Activated CD4-positive, alpha-beta T cell treated with anti-CD3 and anti-CD28 coated beads for 36 hours (primary cell): ENCODE measurements at regions of chr3 and their contacts with region 1.

Region 1: DNA sequence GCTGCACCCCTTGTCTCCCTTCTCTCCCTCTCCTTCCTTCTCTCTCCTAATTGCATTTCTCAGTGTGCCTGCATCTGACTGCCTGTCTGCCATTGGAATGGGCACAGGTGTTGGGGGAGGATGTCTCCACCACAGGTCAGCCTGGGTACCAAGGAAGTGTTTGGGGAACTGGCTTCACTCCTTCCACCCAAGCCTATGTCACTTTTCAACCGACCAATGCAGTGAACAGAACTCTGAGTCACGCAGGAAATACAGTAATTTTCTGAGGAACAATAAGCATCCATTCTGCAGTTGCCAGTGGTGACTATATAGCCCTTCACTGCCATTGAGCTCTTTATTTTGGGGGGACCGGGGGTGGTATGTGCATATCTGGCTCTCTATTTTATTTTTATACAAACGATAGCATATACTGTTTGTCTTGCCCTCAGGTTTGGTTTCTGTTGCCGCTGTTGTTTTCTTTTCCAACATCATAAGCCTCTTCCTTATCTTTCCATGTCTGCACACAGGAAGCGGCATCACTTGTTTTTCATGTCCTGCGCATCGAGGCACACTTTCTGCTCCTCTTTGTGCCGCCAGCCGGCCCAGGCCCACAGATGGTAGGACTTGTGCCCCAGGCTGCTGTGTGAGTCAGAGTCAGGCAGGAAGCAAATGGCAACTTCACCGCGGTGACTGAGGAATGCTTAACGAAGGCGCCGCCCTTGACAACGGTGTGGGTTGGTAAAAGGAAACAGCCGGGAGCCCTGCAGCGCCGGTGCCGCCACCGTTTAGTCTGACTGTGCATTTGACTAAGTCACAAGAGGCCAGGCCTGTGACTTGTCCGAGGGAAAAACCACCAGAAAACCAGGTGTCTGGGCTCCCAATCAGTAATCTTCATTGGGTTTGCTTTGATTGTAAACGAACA is 21.1 kb upstream of the CDCP1 start:
- DNase-seq: peak; percentile 94
- ATAC-seq: peak; percentile 96
- H3K4me3 Mint-ChIP-seq: peak overlapping the region; percentile 63
- H3K27ac Mint-ChIP-seq: peak overlapping the region; percentile 98
- H3K4me1 Mint-ChIP-seq: peaks cover 37% of the 10 kb centered on the region
- H3K27me3 Mint-ChIP-seq: no peaks in the 10 kb centered on the region

Region 2: DNA sequence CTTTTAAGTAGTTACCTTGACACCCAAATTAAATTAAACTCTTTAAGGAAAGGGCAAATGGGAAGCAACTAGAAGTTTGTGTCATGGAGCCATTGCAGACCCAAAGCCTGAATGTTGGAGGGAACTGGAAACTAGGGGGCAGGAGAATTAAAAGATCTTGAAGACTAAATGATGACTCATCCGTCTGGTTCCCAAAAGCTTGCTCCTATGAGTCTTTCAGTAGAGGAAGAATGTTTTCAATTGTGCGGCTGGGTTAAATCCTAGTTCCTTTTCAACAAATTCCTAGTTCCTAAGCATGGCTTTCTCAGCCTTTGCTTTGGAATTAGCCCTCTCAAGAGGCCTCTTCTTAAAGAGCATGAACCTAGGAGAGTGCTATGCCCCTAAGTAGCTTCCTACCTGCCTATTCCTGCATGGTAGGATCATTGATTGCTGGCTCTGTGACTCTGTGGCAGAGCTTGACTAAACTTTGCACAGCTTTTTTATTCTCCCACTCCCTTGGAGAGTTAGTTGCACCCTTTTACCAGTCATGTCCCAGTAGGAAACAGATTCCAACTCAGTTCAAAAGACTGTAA is 123.4 kb before region 1 on chr3:
- CTCF ChIA-PET with region 1: interaction called, 4 read pairs
- POLR2A ChIA-PET with region 1: no interaction called
- intact Hi-C with region 1: loop called in 1 of 2 experiments (anchors 5 kb)
- DNase-seq: no peak
- ATAC-seq: no peak
- H3K4me3 Mint-ChIP-seq: no peak overlapping the region
- H3K27ac Mint-ChIP-seq: no peak overlapping the region
- H3K4me1 Mint-ChIP-seq: peaks cover 23% of the 10 kb centered on the region
- H3K27me3 Mint-ChIP-seq: peaks cover 3% of the 10 kb centered on the region

Region 3: DNA sequence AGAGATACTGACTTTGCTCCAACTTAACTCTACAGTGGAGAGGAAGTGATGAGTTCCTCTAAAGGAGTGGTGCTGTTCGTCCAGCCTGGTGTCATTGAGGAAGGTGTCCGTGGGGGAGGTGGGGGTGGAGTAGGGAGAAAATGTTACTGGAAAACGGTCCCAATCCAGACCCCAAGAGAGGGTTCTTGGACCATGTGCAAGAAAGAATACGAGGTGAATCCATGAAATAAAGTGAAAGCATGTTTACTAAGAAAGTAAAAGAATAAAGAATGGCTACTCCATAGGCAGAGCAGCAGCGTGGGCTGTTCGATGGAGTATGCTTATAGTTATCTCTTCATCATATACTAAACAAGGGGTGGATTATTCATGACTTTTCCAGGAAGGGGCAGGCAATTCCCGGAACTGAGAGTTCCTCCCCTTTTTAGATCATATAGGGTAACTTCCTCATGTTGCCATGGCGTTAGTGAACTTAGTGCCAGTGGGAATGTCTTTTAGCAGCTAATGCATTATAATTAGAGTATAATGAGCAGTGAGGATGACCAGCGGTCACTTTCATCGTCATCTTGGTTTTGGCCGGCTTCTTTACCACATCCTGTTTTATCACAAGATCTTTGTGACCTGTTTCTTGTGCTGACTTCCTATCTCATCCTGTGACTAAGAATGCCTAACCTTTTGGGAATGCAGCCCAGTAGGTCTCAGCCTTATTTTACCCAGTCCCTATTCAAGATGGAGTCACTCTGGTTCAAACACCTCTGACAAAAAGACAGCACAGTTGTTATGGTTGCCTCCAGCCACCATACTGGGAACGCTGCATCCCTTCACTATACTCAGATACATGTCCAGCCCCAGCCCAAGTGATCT is 102.5 kb before region 1 on chr3:
- CTCF ChIA-PET with region 1: no interaction called
- POLR2A ChIA-PET with region 1: no interaction called
- intact Hi-C with region 1: loop called in 1 of 2 experiments (anchors 5 kb)
- DNase-seq: peak; percentile 80
- ATAC-seq: peak; percentile 84
- H3K4me3 Mint-ChIP-seq: peak overlapping the region; percentile 37
- H3K27ac Mint-ChIP-seq: peak overlapping the region; percentile 82
- H3K4me1 Mint-ChIP-seq: peaks cover 30% of the 10 kb centered on the region
- H3K27me3 Mint-ChIP-seq: peaks cover 2% of the 10 kb centered on the region

Region 4: GRCh38 chr3:45105855-45106671 is 61.2 kb before region 1 on chr3:
- CTCF ChIA-PET with region 1: interaction called, 3 read pairs
- POLR2A ChIA-PET with region 1: interaction called, 6 read pairs
- intact Hi-C with region 1: loop called (anchors 1 to 2 kb)
- DNase-seq: peak; percentile 85
- ATAC-seq: peak; percentile 81
- H3K4me3 Mint-ChIP-seq: peak overlapping the region; percentile 37
- H3K27ac Mint-ChIP-seq: peak overlapping the region; percentile 62
- H3K4me1 Mint-ChIP-seq: peaks cover 81% of the 10 kb centered on the region
- H3K27me3 Mint-ChIP-seq: peaks cover 4% of the 10 kb centered on the region

Region 5: GRCh38 chr3:45119824-45120614 is 47.2 kb before region 1 on chr3:
- CTCF ChIA-PET with region 1: no interaction called
- POLR2A ChIA-PET with region 1: interaction called, 5 read pairs
- intact Hi-C with region 1: loop called in 1 of 2 experiments (anchors 2 kb)
- DNase-seq: no peak
- ATAC-seq: no peak
- H3K4me3 Mint-ChIP-seq: no peak overlapping the region
- H3K27ac Mint-ChIP-seq: no peak overlapping the region
- H3K4me1 Mint-ChIP-seq: peaks cover 35% of the 10 kb centered on the region
- H3K27me3 Mint-ChIP-seq: no peaks in the 10 kb centered on the region

Region 6: DNA sequence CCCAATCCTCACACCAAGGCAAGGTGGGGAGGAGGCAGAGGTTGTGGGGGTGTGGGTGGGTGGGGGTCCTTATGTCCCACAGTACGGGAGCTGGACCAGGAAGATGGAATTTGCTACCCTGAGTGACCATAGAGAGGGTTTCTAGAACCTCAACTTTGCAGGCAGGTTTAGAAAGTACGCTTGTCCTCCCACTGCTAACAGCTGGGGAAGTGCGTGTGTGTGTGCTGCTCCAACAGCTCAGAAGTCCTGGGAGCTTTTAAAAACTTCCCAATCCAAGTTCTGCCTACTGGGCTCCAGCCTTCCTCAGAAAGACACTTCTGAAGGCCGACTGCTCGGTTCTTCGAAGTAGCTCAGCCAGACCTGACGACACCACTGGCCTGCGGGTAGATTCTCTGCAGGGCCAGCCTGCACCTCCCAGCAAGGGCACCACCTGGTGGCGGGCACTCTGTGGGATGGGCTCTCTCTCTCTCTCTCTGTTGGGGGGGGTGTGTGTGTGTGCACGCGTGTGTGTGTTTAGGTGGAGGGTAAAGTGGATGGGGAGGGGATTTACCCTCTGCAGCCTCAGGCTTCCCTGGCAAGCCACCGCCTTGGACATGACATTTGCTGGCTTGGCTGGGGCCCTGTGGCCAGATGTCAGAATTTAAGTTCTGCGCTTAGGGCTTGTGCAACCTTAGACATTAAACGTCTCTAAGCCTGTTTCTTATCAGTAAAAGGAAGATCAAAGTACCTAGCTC is 43.2 kb after region 1 on chr3:
- CTCF ChIA-PET with region 1: no interaction called
- POLR2A ChIA-PET with region 1: interaction called, 3 read pairs
- intact Hi-C with region 1: loop called in 1 of 2 experiments (anchors 1 kb)
- DNase-seq: peak; percentile 90
- ATAC-seq: peak; percentile 91
- H3K4me3 Mint-ChIP-seq: no peak overlapping the region
- H3K27ac Mint-ChIP-seq: no peak overlapping the region
- H3K4me1 Mint-ChIP-seq: peaks cover 28% of the 10 kb centered on the region
- H3K27me3 Mint-ChIP-seq: peaks cover 10% of the 10 kb centered on the region

Region 7: DNA sequence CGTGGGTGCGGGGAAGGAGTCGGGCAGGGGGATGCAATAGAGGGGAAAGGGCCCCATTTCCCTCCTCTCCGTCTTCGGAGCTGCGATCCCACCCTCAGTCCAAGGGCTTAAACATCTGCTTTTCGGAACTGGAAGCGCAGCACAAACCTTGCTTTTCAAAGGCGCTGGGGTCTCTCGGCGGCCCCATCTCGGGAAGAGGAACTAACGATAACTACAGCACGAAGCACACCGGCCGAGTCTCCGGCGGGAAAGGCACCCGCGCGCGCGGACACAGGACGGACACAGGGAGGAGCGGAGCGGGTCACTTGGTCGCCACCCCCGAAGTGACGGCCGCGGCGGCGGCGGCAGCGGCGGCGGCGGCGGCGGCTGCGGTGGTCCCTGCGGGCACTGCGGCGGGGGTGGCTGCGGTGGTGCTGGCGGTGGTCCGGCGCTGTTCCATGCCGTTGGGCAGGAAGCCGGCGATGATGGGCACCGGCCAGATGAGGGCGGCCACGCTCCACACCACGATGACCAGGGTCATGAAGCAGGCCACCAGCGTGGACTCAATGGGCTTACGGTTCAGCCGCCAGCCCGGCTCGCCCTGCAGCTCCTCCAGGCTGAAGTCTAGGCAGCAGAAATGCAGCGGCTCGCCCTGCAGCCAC is 57.7 kb after region 1 on chr3:
- CTCF ChIA-PET with region 1: no interaction called
- POLR2A ChIA-PET with region 1: interaction called, 3 read pairs
- intact Hi-C with region 1: loop called in 1 of 2 experiments (anchors 1 kb)
- DNase-seq: peak; percentile 60
- ATAC-seq: no peak
- H3K4me3 Mint-ChIP-seq: peak overlapping the region; percentile 73
- H3K27ac Mint-ChIP-seq: no peak overlapping the region
- H3K4me1 Mint-ChIP-seq: peaks cover 13% of the 10 kb centered on the region
- H3K27me3 Mint-ChIP-seq: peaks cover 62% of the 10 kb centered on the region